Psoas muscle (tissue), 8 donors: ENCODE measurements at regions of chr4 and their contacts with region 1.

Region 1: DNA sequence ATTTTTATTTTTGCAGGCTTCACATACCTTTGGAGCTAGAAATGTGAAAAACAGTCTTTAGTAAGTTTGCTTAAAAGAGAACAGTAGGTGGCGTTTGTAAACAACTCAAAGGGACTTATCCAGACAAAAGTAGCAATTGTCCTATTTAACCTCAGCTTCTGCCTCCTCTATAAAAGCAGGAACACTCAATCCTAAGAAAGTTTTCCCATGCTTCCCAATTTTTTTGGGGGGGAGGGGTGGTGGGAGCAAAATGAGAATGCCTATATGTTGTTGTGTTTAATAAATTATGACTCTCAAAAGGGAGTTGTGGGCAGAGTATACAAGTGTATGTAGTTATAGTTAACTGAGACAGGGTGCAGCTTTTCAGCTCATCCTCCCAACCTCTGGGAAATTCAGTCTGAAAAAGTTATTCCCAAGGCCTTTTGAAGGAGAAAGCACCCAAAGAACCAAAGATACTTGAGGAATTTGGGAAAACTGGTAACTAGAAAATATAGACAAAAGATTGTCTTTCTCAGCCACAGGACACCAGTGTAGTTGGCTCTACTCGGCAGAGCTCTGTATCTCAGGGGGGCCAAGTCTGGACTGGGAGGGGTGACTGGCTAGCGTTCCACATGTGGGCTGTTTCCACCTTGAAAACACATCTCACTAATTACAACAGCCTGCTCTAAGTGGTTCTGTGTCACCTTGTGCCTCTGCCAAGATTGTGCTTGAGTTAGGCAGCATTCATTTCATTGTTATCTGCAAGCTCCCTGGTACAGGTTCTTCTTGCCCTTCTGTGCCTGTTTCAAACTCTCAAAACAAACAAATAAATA is 2.8 kb downstream of the SFRP2 start:
- DNase-seq: no peak
- ATAC-seq: no peak
- H3K4me3 ChIP-seq: no peak overlapping the region
- H3K27ac ChIP-seq: no peak overlapping the region
- H3K4me1 ChIP-seq: no peaks in the 10 kb centered on the region
- H3K27me3 ChIP-seq: peaks cover 0 to 43% (median 23%) of the 10 kb centered on the region in 3 donors
- CTCF ChIP-seq: peak; percentile 12

Region 2: DNA sequence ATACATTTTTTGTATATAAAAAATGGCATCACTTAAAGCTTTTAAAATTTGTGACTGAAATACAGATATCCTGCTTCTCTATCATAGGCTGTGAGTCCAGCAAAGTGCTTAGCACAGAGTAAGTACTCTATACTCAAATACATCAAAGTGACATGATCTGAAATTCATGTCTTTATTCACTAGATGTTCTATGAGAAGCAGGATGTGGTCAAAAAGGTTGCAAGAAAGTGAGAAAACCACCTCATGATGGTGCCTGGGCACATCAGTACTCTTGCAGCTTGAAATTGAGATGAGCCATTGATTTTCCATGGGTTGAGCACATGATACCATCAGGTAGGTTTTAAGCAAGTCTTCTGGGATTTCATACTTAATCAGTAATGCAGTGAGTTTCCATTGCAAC is 23.2 kb after region 1 on chr4:
- intact Hi-C with region 1: no loop called
- DNase-seq: no peak
- ATAC-seq: no peak
- H3K4me3 ChIP-seq: no peak overlapping the region
- H3K27ac ChIP-seq: no peak overlapping the region
- H3K4me1 ChIP-seq: no peaks in the 10 kb centered on the region
- H3K27me3 ChIP-seq: no peaks in the 10 kb centered on the region
- CTCF ChIP-seq: no peak

Region 3: DNA sequence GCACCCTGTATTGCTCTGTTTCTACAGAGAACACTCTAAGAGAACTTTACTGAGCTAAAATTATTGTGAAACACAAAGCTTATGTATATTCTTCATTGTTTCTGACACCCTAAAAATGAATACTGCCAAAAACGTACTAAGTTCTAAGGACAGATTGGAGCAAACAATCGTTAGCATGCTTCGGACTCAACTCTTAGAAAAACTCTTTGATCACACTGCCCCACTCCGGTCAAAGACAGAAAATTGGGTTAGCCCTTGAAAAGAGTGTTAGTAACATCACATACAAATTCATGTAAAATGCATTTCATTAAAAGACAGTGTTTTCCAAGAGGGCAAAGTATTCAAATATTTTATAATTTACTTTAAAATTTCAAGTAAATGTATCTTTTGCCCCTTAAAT is 528.1 kb after region 1 on chr4:
- intact Hi-C with region 1: loop called in 1 of 2 experiments (anchors 10 kb)
- DNase-seq: no peak
- ATAC-seq: no peak
- H3K4me3 ChIP-seq: no peak overlapping the region
- H3K27ac ChIP-seq: no peak overlapping the region
- H3K4me1 ChIP-seq: no peaks in the 10 kb centered on the region
- H3K27me3 ChIP-seq: no peaks in the 10 kb centered on the region
- CTCF ChIP-seq: no peak